Colonic mucosa (tissue), 4 donors: ENCODE measurements at regions of chr2 and their contacts with region 1.

Region 1: GRCh38 chr2:221573430-221574230 is 1.5 kb upstream of the EPHA4 start:
- DNase-seq: peak; percentile 91
- H3K4me3 ChIP-seq: peak overlapping the region; percentile 86
- H3K27ac ChIP-seq: peak overlapping the region; percentile 71
- H3K4me1 ChIP-seq: no peaks in the 10 kb centered on the region
- H3K27me3 ChIP-seq: no peaks in the 10 kb centered on the region
- CTCF ChIP-seq: peak; percentile 94

Region 2: DNA sequence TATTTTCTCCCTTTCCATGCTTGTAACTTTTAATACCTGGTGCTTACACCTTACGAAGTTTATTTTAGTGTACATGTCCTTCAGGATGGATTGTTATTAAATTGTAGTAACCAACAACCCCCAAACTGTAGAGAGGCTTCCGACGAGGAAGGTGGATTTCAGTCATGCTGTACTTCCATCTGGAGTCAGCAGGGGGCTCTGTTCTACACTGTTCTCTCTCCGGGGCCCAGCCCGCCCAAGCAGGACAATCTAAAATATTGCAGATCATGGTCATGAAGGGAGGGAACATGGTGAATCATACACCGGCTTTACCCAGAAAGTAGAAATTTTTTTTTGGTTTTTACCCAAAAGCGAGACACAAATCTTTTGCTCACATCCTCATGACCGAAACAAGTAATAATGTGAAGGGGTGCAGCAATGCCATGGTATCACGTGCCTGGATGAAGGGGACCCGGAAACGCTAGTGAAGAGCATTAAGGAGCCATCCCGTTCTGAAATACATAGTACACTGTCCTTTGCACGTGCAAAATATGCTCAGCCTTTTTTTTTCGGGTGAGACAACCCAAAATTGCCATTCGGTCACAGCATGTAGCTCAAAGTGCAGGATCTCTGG is 886.3 kb before region 1 on chr2:
- intact Hi-C with region 1: loop called (anchors 2 kb)
- DNase-seq: peak; percentile 69
- H3K4me3 ChIP-seq: no peak overlapping the region
- H3K27ac ChIP-seq: no peak overlapping the region
- H3K4me1 ChIP-seq: no peaks in the 10 kb centered on the region
- H3K27me3 ChIP-seq: no peaks in the 10 kb centered on the region
- CTCF ChIP-seq: peak; percentile 79

Region 3: DNA sequence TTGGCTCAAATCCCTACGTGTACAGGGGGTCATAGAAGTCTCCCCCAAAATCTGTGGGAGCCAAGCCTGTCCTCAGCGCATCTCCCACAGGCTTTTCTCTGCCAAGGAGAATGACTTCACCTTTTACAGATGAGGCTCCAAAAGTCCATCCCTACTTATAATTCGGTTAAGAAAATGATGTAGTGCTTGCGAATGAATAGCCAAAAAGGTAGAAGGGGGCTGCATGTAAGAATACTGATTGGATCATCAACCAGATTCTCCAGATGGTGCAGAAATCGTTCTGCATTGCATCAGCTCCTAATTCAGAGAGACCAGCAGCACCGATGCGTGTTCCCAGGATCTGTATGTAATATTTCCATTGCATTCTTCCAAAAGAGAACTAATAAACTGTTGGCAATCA is 93.5 kb before region 1 on chr2:
- intact Hi-C with region 1: loop called (anchors 10 kb)
- DNase-seq: no peak
- H3K4me3 ChIP-seq: no peak overlapping the region
- H3K27ac ChIP-seq: no peak overlapping the region
- H3K4me1 ChIP-seq: no peaks in the 10 kb centered on the region
- H3K27me3 ChIP-seq: no peaks in the 10 kb centered on the region
- CTCF ChIP-seq: no peak

Region 4: GRCh38 chr2:221716426-221717303 is 143.0 kb after region 1 on chr2:
- intact Hi-C with region 1: loop called (anchors 10 kb)
- DNase-seq: peak; percentile 36
- H3K4me3 ChIP-seq: no peak overlapping the region
- H3K27ac ChIP-seq: peak overlapping the region; percentile 41
- H3K4me1 ChIP-seq: peaks cover 5% of the 10 kb centered on the region
- H3K27me3 ChIP-seq: no peaks in the 10 kb centered on the region
- CTCF ChIP-seq: no peak

Region 5: DNA sequence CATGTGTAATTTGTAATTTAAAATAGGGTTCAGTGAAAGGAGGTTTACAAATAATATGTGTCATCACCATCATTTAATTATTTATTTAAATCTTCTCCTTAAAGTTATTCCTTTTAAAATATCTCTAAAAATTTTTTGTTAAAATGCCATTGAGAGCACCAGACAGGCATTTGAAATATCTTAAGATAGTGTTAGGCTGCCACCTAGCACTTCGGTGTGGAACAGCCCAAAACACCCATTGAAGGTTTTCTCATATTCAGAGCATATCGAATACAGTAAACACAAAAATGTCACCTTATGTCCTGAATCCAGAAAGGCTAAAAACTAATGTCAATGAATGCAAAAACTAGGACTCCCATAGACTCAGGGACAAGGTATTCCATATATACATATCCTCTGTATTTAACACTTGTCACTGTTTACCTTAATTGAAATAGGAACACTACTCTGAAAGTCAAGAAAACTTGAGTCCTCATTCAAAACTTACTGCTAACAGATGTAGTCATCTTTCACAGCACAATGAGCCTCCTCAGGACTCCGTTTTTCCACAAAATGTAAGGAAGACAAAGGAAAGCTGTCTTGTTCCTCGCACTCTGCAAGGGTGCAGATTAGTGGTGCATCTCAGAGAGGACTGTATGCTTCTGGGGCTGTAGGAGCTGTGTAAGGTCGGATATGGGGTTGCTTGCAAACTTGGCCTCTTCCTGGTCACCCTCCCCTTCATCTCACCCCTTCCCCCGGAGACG is 395.6 kb after region 1 on chr2:
- intact Hi-C with region 1: loop called (anchors 10 kb)
- DNase-seq: no peak
- H3K4me3 ChIP-seq: no peak overlapping the region
- H3K27ac ChIP-seq: no peak overlapping the region
- H3K4me1 ChIP-seq: no peaks in the 10 kb centered on the region
- H3K27me3 ChIP-seq: no peaks in the 10 kb centered on the region
- CTCF ChIP-seq: peak; percentile 60